Natural killer cell (primary cell): ENCODE measurements at regions of chr6 and their contacts with region 1.

Region 1: DNA sequence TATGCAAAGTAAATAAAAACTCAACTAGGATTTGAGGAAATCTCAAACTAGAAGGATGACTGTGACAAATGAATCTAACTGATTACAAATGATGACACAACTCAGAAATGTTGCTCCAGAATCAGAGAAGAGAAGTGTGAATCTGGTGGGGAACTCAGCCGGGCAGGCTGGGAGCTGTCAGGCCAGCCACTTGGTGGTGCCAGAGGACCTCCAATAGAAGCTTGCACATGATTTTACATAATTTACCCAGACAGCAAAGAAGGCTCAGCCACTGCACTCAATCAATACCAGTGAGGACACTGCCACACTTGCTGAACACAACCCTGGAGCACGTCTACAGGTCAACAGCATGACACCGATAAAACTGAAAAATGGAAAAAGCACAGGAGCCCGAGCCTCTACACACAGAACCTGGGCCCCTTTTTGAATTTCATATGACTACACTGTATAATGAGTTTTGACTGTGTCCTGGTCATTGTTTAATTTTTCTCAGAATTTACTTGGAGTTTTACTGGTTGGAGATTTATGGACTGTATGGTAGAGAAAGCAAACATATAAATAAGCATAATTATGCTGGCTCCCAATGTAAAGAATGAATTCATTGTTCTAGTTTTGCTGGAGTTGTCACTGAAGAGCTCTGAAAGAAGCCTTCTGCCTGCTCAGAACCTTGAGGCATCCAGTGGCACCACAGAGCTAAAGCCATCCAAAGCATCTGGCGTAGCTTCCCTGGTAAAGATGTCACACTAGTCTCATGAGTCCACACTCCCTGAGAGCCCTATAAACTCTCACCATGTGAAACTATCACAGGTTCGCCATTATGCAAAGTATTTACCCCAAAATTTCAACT is 296.5 kb downstream of the THBS2 start:
- DNase-seq: peak; percentile 44 to 66
- ATAC-seq: peak; percentile 49 to 93 (median 84)
- H3K4me3 ChIP-seq: no peak overlapping the region
- H3K4me3 Mint-ChIP-seq: no peak overlapping the region
- H3K27ac ChIP-seq: no peak overlapping the region
- H3K27ac Mint-ChIP-seq: peak overlapping the region; percentile 6 to 81
- H3K4me1 ChIP-seq: no peaks in the 10 kb centered on the region
- H3K4me1 Mint-ChIP-seq: peaks cover 12 to 13% of the 10 kb centered on the region in 2 donors
- H3K27me3 ChIP-seq: no peaks in the 10 kb centered on the region
- H3K27me3 Mint-ChIP-seq: peaks cover 4 to 12% of the 10 kb centered on the region in 2 donors
- CTCF ChIP-seq: peak; percentile 68

Region 2: DNA sequence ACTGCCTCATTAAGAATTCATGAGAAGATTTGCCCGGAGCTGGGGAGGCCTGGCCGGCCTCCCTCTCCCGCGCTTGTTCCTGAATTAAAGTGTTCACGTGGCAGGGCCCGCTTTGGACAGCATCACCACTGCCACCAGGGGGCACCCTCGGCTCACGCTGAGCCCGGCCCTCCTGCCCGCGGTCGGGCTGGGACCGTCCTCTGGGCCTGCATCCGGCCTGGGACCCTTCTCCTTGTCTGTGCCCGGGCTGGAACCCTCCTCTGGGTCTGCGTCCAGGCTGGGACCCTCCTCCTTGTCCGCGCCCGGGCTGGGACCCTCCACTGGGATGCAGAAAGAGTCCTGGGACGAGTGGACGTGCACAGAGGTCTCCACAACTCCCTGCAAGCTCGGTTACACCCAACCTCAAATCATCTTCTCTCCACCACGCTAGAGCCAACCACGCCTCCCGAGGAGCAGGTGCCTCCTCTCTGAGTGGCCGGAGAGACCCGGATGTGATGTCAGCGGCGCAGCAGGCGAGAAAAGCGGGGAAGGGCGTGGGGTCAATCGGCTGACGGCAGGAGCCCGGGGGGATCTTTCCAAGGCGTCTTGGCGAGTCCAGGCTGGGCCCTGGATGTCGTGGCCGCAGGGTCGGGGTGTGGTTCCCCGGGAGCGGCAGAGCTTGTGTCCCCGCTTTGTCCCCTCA is 586.7 kb before region 1 on chr6:
- intact Hi-C with region 1: loop called (anchors 5 kb)
- DNase-seq: peak; percentile 58 to 61
- ATAC-seq: peak in 2 of 3 donors; percentile 66 to 88
- H3K4me3 ChIP-seq: no peak overlapping the region
- H3K4me3 Mint-ChIP-seq: no peak overlapping the region
- H3K27ac ChIP-seq: no peak overlapping the region
- H3K27ac Mint-ChIP-seq: no peak overlapping the region
- H3K4me1 ChIP-seq: peaks cover 5% of the 10 kb centered on the region
- H3K4me1 Mint-ChIP-seq: peaks cover 14 to 23% of the 10 kb centered on the region in 2 donors
- H3K27me3 ChIP-seq: no peaks in the 10 kb centered on the region
- H3K27me3 Mint-ChIP-seq: peaks cover 6 to 7% of the 10 kb centered on the region in 2 donors
- CTCF ChIP-seq: peak; percentile 78

Region 3: DNA sequence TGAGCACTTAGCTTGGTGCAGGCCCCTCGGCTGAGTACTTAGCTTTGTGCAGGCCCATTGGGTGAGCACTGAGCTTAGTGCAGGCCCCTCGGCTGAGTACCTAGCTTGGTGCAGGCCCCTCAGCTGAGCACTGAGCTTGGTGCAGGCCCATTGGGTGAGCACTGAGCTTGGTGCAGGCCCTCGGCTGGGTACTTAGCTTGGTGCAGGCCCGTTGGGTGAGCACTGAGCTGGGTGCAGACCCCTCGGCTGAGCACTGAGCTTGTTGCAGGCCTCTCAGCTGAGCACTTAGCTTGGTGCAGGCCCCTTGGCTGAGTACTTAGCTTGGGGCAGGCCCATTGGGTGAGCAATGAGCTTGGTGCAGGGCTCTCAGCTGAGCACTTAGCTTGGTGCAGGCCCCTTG is 90.6 kb before region 1 on chr6:
- intact Hi-C with region 1: no loop called
- DNase-seq: no peak
- ATAC-seq: peak in 1 of 3 donors; percentile 15
- H3K4me3 ChIP-seq: no peak overlapping the region
- H3K4me3 Mint-ChIP-seq: no peak overlapping the region
- H3K27ac ChIP-seq: no peak overlapping the region
- H3K27ac Mint-ChIP-seq: no peak overlapping the region
- H3K4me1 ChIP-seq: no peaks in the 10 kb centered on the region
- H3K4me1 Mint-ChIP-seq: peaks cover 0 to 5% of the 10 kb centered on the region in 2 donors
- H3K27me3 ChIP-seq: no peaks in the 10 kb centered on the region
- H3K27me3 Mint-ChIP-seq: no peaks in the 10 kb centered on the region
- CTCF ChIP-seq: no peak

Region 4: DNA sequence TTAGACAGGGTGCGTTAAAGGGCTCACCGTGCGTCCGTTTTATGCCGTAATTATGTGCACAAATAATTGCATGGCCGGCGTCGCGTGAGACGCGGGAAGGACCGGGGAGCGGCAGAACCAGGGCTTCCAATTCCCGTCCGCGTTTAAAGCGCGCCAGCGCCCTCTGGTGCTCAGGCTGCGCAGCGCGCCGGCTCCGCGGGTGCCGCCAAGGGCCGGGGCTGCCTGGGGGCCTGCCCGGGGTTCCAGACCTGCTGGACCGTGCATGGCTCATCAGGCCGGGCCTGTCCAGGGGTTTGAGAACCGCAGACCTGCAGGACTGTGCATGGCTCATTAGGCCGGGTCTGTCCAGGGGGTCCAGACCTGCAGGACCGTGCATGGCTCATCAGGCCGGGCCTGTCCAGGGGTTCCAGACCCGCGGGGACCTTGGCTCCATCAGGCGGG is 72.4 kb before region 1 on chr6:
- intact Hi-C with region 1: no loop called
- DNase-seq: peak; percentile 80 to 81
- ATAC-seq: peak; percentile 76 to 94 (median 82)
- H3K4me3 ChIP-seq: peak overlapping the region; percentile 44
- H3K4me3 Mint-ChIP-seq: peak overlapping the region; percentile 85
- H3K27ac ChIP-seq: peak overlapping the region; percentile 87
- H3K27ac Mint-ChIP-seq: peak overlapping the region; percentile 85 to 96
- H3K4me1 ChIP-seq: peaks cover 25% of the 10 kb centered on the region
- H3K4me1 Mint-ChIP-seq: peaks cover 30 to 35% of the 10 kb centered on the region in 2 donors
- H3K27me3 ChIP-seq: no peaks in the 10 kb centered on the region
- H3K27me3 Mint-ChIP-seq: no peaks in the 10 kb centered on the region
- CTCF ChIP-seq: peak; percentile 96

Region 5: GRCh38 chr6:168895102-168895812 is 61.9 kb before region 1 on chr6:
- intact Hi-C with region 1: loop called (anchors 2 kb)
- DNase-seq: peak; percentile 74 to 86
- ATAC-seq: peak; percentile 83 to 99 (median 98)
- H3K4me3 ChIP-seq: no peak overlapping the region
- H3K4me3 Mint-ChIP-seq: peak overlapping the region; percentile 78
- H3K27ac ChIP-seq: peak overlapping the region; percentile 22
- H3K27ac Mint-ChIP-seq: peak overlapping the region; percentile 77 to 88
- H3K4me1 ChIP-seq: peaks cover 8% of the 10 kb centered on the region
- H3K4me1 Mint-ChIP-seq: peaks cover 24 to 34% of the 10 kb centered on the region in 2 donors
- H3K27me3 ChIP-seq: no peaks in the 10 kb centered on the region
- H3K27me3 Mint-ChIP-seq: peaks cover 0 to 8% of the 10 kb centered on the region in 2 donors
- CTCF ChIP-seq: peak; percentile 96

Region 6: DNA sequence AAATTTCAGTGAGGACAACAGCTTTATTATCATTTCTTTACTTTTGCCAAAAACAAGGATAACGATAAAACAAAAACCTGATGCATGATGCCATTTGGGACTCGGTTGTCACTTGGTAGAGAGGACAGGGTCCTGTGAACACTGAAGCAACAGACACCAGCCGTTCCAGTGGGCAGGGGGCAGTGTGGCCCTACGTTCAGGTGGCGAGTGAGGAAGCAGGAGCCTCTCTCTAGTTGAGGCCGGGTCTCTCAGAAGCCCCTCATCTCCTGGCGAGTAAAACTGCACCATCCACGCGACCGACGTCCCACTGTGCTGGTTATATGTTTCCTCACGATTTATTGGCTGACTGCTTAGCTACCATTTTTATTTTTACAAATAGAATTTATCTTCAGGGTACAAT is 65.0 kb after region 1 on chr6:
- intact Hi-C with region 1: no loop called
- DNase-seq: no peak
- ATAC-seq: no peak
- H3K4me3 ChIP-seq: no peak overlapping the region
- H3K4me3 Mint-ChIP-seq: no peak overlapping the region
- H3K27ac ChIP-seq: no peak overlapping the region
- H3K27ac Mint-ChIP-seq: no peak overlapping the region
- H3K4me1 ChIP-seq: no peaks in the 10 kb centered on the region
- H3K4me1 Mint-ChIP-seq: no peaks in the 10 kb centered on the region
- H3K27me3 ChIP-seq: no peaks in the 10 kb centered on the region
- H3K27me3 Mint-ChIP-seq: peaks cover 0 to 8% of the 10 kb centered on the region in 2 donors
- CTCF ChIP-seq: no peak

Region 7: DNA sequence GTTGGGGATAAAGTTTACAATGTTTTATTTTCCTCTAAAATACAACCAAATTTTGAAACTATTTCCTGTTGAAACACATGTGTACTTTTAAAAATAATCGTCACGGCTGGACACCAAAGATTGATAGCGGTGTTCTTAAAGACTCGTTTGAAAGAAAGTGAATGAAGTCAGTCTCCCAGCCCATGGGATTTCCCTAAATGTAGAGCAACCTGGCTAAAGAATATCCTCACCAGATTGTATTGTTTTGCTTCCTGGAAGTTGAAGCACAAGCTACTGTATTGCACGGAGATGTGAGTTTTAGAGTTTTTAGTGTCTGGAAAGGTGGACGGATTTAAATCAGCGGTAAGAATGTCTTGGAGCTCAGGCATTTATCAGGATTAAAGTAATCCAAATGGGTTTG is 107.1 kb after region 1 on chr6:
- intact Hi-C with region 1: no loop called
- DNase-seq: no peak
- ATAC-seq: no peak
- H3K4me3 ChIP-seq: no peak overlapping the region
- H3K4me3 Mint-ChIP-seq: no peak overlapping the region
- H3K27ac ChIP-seq: no peak overlapping the region
- H3K27ac Mint-ChIP-seq: no peak overlapping the region
- H3K4me1 ChIP-seq: no peaks in the 10 kb centered on the region
- H3K4me1 Mint-ChIP-seq: no peaks in the 10 kb centered on the region
- H3K27me3 ChIP-seq: no peaks in the 10 kb centered on the region
- H3K27me3 Mint-ChIP-seq: peaks cover under 1 to 8% of the 10 kb centered on the region in 2 donors
- CTCF ChIP-seq: no peak